PC-9 (cell line): ENCODE measurements at regions of chr6 and their contacts with region 1.

Region 1: DNA sequence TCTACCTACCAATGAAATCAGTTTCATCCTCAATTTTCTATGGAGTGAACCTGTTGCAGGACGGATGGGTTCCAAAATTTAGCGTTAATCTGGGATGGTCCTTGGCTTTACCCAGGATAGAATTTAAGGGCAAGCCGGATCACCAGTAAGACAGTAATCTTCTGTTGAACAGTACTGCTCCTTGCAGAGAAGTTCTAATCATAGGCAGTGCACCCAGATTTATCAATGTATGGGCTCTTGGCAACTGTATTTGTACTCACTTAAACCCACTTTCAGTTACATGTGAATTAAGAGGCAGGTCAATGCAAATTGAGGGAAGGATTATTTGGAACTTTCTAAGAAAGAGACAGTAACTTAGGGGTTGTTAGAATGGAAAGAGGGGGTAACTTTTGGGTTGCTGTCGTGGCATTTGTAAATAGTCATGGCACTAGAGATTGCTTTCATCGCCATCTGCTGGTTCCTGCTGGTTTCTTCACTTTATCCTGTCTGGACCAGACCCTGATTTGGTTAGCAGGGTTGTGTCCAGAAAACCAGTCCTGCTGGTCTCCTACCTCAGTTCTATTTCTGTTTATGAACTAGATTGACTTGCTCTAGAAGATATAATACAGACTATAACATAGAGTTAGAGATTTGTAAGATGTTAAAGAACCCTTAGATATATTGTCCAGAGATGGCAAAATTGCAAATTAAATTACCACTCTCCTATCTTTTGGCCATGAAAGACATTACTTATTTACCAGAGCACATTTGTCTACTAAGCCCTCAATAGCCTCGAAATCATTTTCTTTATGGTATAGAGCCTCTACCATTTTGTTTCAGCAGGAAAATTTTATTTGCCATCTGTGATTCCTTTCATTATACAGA is 646.3 kb downstream of the UTRN start:
- DNase-seq: peak; percentile 30 to 49
- H3K4me3 ChIP-seq: no peak overlapping the region
- H3K27ac ChIP-seq: no peak overlapping the region
- H3K4me1 ChIP-seq: 0 out of 2 replicates have a peak, but pooled peaks cover 11% of the 10 kb centered on the region
- H3K27me3 ChIP-seq: no peaks in the 10 kb centered on the region
- CTCF ChIP-seq: peak; percentile 78

Region 2: GRCh38 chr6:144797881-144798595 is 133.4 kb before region 1 on chr6:
- CTCF ChIA-PET with region 1: no interaction called
- POLR2A ChIA-PET with region 1: no interaction called
- intact Hi-C with region 1: loop called (anchors 5 kb)
- DNase-seq: peak; percentile 13 to 92
- H3K4me3 ChIP-seq: no peak overlapping the region
- H3K27ac ChIP-seq: peak overlapping the region; percentile 37
- H3K4me1 ChIP-seq: peaks cover 30% of the 10 kb centered on the region
- H3K27me3 ChIP-seq: no peaks in the 10 kb centered on the region
- CTCF ChIP-seq: no peak

Region 3: DNA sequence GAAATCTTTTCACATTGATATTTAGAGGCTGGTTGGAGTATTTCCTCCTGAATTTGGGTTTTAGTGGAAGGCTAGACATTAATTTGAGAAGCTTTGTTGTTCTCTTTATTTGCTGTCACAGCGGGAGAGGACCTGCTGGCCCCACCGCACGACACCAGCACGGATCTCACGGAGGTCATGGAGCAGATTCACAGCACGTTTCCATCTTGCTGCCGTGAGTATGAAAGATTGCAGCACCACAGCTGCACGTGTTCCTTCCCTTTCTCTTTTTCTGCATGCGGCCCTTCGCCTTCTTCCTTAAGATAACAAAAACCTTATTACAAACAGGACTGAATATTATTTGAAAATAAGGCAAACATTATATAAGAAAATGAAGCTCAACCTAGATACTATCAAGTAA is 90.8 kb before region 1 on chr6:
- CTCF ChIA-PET with region 1: no interaction called
- POLR2A ChIA-PET with region 1: no interaction called
- intact Hi-C with region 1: loop called (anchors 1 kb)
- DNase-seq: no peak
- H3K4me3 ChIP-seq: no peak overlapping the region
- H3K27ac ChIP-seq: no peak overlapping the region
- H3K4me1 ChIP-seq: no peaks in the 10 kb centered on the region
- H3K27me3 ChIP-seq: no peaks in the 10 kb centered on the region
- CTCF ChIP-seq: no peak

Region 4: DNA sequence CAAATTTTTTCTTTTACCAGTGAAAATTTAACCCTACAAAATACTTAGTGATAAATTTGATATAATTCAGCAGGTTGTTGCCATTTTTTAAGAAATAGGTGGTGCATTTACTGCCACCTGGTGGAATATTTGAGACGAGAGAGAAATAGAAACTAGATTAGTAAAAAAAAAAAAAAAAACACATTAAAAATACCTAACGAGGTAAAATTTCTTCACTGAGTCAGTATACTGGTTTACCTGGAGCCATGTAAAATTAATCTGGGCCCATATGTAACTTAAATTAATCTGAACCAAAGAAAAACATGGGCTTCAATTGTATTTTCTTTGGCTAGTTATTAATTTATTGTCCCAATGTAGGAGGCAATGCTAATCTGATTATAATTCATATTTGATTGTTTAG is 283.2 kb after region 1 on chr6:
- CTCF ChIA-PET with region 1: no interaction called
- POLR2A ChIA-PET with region 1: no interaction called
- intact Hi-C with region 1: loop called (anchors 5 kb)
- DNase-seq: no peak
- H3K4me3 ChIP-seq: no peak overlapping the region
- H3K27ac ChIP-seq: no peak overlapping the region
- H3K4me1 ChIP-seq: no peaks in the 10 kb centered on the region
- H3K27me3 ChIP-seq: no peaks in the 10 kb centered on the region
- CTCF ChIP-seq: peak; percentile 79

Region 5: GRCh38 chr6:145315982-145316600 is 384.7 kb after region 1 on chr6:
- CTCF ChIA-PET with region 1: no interaction called
- POLR2A ChIA-PET with region 1: no interaction called
- intact Hi-C with region 1: no loop called
- DNase-seq: no peak
- H3K4me3 ChIP-seq: no peak overlapping the region
- H3K27ac ChIP-seq: no peak overlapping the region
- H3K4me1 ChIP-seq: no peaks in the 10 kb centered on the region
- H3K27me3 ChIP-seq: no peaks in the 10 kb centered on the region
- CTCF ChIP-seq: no peak